ENCODE measurements at regions of chr9 and their contacts with region 1.

Region 1: DNA sequence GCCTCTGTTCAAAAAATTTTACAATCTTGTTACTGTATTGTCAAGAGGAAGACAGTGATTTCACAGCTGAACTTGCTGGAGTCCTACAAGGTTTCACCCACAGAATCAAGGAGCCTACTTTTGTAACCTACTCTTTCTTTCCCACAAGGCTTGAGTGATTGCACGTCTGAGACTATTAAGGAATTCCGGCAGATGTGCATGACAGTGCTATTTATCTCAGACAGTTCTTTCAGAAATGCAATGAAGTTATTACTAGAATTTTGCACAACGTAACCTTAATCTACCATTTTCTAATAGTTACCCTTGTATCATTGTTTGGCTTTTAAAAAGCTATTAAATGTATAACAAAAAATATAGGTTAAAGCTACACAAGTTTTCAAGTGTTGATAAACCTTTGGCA is 400.1 kb downstream of the PTPRD start:
- DNase-seq: no peak
- ATAC-seq: no peak
- H3K4me3 ChIP-seq: no peak overlapping the region
- H3K4me3 Mint-ChIP-seq: no peak overlapping the region
- H3K27ac ChIP-seq: no peak overlapping the region
- H3K27ac Mint-ChIP-seq: no peak overlapping the region
- H3K4me1 ChIP-seq: no peaks in the 10 kb centered on the region
- H3K4me1 Mint-ChIP-seq: no peaks in the 10 kb centered on the region
- H3K27me3 ChIP-seq: no peaks in the 10 kb centered on the region
- H3K27me3 Mint-ChIP-seq: no peaks in the 10 kb centered on the region

Region 2: DNA sequence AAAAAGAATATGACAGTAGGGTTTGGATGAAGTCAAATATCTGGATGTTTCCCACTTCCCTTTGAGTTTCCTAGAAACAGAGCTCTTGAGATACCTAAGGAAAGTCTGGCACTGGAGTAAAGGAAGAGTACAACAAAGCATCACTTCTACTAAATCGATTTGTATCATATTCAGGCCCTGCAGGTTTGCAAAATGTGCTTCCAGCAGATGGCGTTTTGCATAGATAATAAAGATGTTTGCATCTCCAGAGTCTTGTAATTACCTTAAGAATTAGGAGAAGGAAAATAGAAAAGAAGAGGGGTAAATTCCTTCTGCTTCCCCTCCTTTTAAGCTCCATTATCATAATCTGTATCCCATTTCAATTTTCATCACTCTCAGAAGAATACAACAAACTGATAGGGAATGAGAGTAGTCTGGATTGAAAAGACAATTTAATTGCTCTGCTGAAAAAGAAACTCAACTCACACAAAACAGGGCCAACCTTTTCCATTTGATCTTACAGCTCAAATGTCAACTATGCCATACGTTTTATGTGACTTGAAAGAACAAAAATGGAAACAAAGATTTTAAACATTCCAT is 19.7 kb after region 1 on chr9:
- CTCF ChIA-PET with region 1: no interaction called
- POLR2A ChIA-PET with region 1: no interaction called
- intact Hi-C with region 1: no loop called
- DNase-seq: no peak
- ATAC-seq: no peak
- H3K4me3 ChIP-seq: no peak overlapping the region
- H3K4me3 Mint-ChIP-seq: no peak overlapping the region
- H3K27ac ChIP-seq: no peak overlapping the region
- H3K27ac Mint-ChIP-seq: no peak overlapping the region
- H3K4me1 ChIP-seq: no peaks in the 10 kb centered on the region
- H3K4me1 Mint-ChIP-seq: no peaks in the 10 kb centered on the region
- H3K27me3 ChIP-seq: no peaks in the 10 kb centered on the region
- H3K27me3 Mint-ChIP-seq: no peaks in the 10 kb centered on the region

Region 3: GRCh38 chr9:10268531-10269485 is 56.1 kb after region 1 on chr9:
- CTCF ChIA-PET with region 1: no interaction called
- POLR2A ChIA-PET with region 1: no interaction called
- intact Hi-C with region 1: loop called in 1 of 2 experiments (anchors 5 kb)
- DNase-seq: no peak
- ATAC-seq: no peak
- H3K4me3 ChIP-seq: no peak overlapping the region
- H3K4me3 Mint-ChIP-seq: no peak overlapping the region
- H3K27ac ChIP-seq: no peak overlapping the region
- H3K27ac Mint-ChIP-seq: no peak overlapping the region
- H3K4me1 ChIP-seq: no peaks in the 10 kb centered on the region
- H3K4me1 Mint-ChIP-seq: no peaks in the 10 kb centered on the region
- H3K27me3 ChIP-seq: no peaks in the 10 kb centered on the region
- H3K27me3 Mint-ChIP-seq: no peaks in the 10 kb centered on the region